AG04449 (cell line): ENCODE measurements at regions of chr18 and their contacts with region 1.

Region 1: GRCh38 chr18:59459369-59460079 is 100.5 kb upstream of the LMAN1 start:
- DNase-seq: no peak
- H3K4me3 ChIP-seq: no peak overlapping the region
- CTCF ChIP-seq: peak; percentile 23

Region 2: DNA sequence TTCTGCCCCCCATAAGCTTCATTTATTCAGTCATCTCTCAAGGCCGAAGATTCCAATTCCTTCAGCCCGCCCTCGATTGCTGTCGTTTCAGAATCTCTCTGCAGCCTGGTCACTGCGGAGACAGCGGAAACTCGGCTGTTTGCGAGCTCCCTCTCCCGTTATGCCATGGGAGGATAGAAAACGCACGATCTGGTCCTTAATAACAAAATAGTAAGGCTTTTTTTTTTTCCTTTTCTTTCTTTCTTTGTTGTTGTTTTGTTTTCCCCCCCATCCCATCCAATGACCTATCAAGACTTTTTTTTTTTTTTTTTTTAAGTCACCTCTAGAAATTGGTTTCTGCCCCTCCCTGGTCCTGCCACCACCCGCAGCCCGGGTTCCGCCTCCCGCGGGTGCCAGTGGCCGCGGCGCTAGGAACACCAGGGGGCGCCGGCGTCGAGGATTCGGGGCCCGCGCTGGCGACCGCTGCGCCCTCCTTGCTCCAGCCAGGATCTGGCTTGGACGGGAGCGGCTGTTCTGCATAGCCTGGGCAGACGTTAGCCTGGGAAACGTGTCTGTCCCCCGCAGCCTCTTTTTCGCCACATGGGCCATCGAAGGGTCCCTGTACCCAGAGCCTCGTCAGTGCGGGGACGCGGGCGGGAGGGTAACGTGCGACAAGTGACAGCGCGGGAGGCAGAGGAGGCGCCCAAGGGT is 151.1 kb before region 1 on chr18:
- CTCF ChIA-PET with region 1: no interaction called
- POLR2A ChIA-PET with region 1: no interaction called
- DNase-seq: no peak
- H3K4me3 ChIP-seq: peak overlapping the region; percentile 48
- CTCF ChIP-seq: peak; percentile 97

Region 3: GRCh38 chr18:59446012-59446411 is 13.5 kb before region 1 on chr18:
- CTCF ChIA-PET with region 1: interaction called, 43 read pairs
- POLR2A ChIA-PET with region 1: no interaction called
- DNase-seq: no peak
- H3K4me3 ChIP-seq: no peak overlapping the region
- CTCF ChIP-seq: no peak

Region 4: GRCh38 chr18:59547581-59548182 is 88.2 kb after region 1 on chr18:
- CTCF ChIA-PET with region 1: interaction called, 12 read pairs
- POLR2A ChIA-PET with region 1: no interaction called
- DNase-seq: peak; percentile 83
- H3K4me3 ChIP-seq: peak overlapping the region; percentile 4
- CTCF ChIP-seq: peak; percentile 7

Region 5: GRCh38 chr18:59623456-59624368 is 164.2 kb after region 1 on chr18:
- CTCF ChIA-PET with region 1: interaction called, 25 read pairs
- POLR2A ChIA-PET with region 1: no interaction called
- DNase-seq: no peak
- H3K4me3 ChIP-seq: no peak overlapping the region; the same call in 1 of the 2 replicates
- CTCF ChIP-seq: no peak

Region 6: DNA sequence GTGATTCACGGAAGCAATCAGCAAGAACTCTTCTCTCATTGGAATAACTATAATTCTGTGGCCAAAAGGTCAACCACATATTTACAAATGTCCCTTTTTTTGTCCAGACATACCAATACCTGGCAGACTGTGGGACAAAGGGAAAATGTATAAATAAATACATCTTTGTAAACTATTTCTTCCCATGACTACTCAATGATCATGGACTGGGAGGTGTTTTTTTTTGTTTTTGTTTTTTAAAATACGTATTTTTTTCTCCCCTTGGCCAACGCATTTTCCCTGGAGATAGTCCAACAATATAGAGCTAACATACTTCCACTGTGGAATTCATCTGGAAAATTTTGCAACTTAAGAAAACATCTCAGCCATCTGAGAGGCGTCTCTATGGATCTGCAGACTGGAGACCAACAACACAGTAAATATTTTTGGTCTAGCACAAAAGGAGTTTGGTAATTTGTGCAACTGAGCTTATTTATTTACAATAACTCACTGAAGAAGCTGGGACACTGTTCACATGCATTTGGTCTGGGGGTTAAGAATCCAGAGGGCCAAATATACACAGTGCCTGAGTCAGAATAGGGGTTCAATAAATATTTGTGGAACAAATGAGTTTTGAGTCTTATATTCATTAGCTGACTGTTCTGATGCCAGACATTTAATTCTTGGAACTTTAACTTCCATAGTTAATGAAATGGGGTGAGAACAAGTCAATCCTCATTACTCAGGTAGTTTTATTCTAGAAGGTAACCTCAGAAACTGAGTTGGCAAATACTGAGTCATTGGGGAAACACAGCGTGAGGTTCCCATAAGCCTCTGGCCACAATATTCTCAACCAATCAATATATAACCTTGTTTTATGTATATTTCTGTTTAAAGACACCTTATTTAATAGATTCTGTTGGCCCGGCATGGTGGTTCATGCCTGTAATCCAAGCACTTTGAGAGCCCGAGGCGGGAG is 201.5 kb after region 1 on chr18:
- CTCF ChIA-PET with region 1: interaction called, 10 read pairs
- POLR2A ChIA-PET with region 1: no interaction called
- DNase-seq: peak; percentile 80
- H3K4me3 ChIP-seq: no peak overlapping the region
- CTCF ChIP-seq: no peak

Region 7: GRCh38 chr18:59837586-59837985 is 378.1 kb after region 1 on chr18:
- CTCF ChIA-PET with region 1: interaction called, 25 read pairs
- POLR2A ChIA-PET with region 1: no interaction called
- DNase-seq: no peak
- H3K4me3 ChIP-seq: no peak overlapping the region
- CTCF ChIP-seq: peak; percentile 79